ENCODE measurements at regions of chr3 and their contacts with region 1.

Region 1: GRCh38 chr3:192929755-192930547 is 12.3 kb upstream of the MB21D2 start:
- DNase-seq: no peak
- H3K4me3 ChIP-seq: no peak overlapping the region
- H3K27ac ChIP-seq: no peak overlapping the region
- H3K4me1 ChIP-seq: no peaks in the 10 kb centered on the region
- H3K27me3 ChIP-seq: no peaks in the 10 kb centered on the region
- CTCF ChIP-seq: no peak
- POLR2A ChIP-seq: no peak

Region 2: GRCh38 chr3:192758654-192759053 is 171.3 kb before region 1 on chr3:
- intact Hi-C with region 1: no loop called
- DNase-seq: no peak
- H3K4me3 ChIP-seq: no peak overlapping the region
- H3K27ac ChIP-seq: no peak overlapping the region
- H3K4me1 ChIP-seq: no peaks in the 10 kb centered on the region
- H3K27me3 ChIP-seq: no peaks in the 10 kb centered on the region
- CTCF ChIP-seq: no peak
- POLR2A ChIP-seq: no peak

Region 3: GRCh38 chr3:193029800-193030199 is 99.8 kb after region 1 on chr3:
- intact Hi-C with region 1: loop called in 1 of 2 experiments (anchors 10 kb)
- DNase-seq: no peak
- H3K4me3 ChIP-seq: no peak overlapping the region
- H3K27ac ChIP-seq: no peak overlapping the region
- H3K4me1 ChIP-seq: no peaks in the 10 kb centered on the region
- H3K27me3 ChIP-seq: no peaks in the 10 kb centered on the region
- CTCF ChIP-seq: no peak
- POLR2A ChIP-seq: no peak

Region 4: GRCh38 chr3:193452338-193452737 is 522.4 kb after region 1 on chr3:
- intact Hi-C with region 1: loop called in 1 of 2 experiments (anchors 5 kb)
- DNase-seq: no peak
- H3K4me3 ChIP-seq: no peak overlapping the region
- H3K27ac ChIP-seq: no peak overlapping the region
- H3K4me1 ChIP-seq: no peaks in the 10 kb centered on the region
- H3K27me3 ChIP-seq: no peaks in the 10 kb centered on the region
- CTCF ChIP-seq: peak; percentile 13 to 40 (median 26)
- POLR2A ChIP-seq: no peak